ENCODE measurements at regions of chr6 and their contacts with region 1.

Region 1: DNA sequence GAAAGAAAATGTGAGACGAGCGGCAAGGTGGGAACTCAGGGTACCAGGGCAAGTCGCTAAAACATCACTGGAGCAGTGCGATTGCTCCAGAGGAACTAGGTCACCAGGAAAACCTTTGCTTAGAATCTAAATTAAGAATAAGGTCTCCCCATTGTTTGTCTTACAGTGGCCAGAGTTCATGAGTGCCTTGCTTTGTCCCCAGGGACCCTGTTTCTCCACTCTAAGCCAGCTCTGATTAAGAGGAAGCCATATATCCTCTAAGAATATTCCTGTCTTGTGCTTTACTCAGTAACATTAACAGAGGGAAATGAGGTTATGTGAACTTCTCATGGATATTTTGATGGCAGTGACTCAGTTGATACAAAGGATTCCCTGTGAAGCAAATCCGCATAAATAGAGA is 305.8 kb downstream of the CD83 start:
- DNase-seq: no peak
- H3K4me3 Mint-ChIP-seq: no peak overlapping the region
- H3K27ac Mint-ChIP-seq: peak overlapping the region; percentile 26
- H3K4me1 Mint-ChIP-seq: peaks cover 26% of the 10 kb centered on the region
- H3K27me3 Mint-ChIP-seq: no peaks in the 10 kb centered on the region

Region 2: DNA sequence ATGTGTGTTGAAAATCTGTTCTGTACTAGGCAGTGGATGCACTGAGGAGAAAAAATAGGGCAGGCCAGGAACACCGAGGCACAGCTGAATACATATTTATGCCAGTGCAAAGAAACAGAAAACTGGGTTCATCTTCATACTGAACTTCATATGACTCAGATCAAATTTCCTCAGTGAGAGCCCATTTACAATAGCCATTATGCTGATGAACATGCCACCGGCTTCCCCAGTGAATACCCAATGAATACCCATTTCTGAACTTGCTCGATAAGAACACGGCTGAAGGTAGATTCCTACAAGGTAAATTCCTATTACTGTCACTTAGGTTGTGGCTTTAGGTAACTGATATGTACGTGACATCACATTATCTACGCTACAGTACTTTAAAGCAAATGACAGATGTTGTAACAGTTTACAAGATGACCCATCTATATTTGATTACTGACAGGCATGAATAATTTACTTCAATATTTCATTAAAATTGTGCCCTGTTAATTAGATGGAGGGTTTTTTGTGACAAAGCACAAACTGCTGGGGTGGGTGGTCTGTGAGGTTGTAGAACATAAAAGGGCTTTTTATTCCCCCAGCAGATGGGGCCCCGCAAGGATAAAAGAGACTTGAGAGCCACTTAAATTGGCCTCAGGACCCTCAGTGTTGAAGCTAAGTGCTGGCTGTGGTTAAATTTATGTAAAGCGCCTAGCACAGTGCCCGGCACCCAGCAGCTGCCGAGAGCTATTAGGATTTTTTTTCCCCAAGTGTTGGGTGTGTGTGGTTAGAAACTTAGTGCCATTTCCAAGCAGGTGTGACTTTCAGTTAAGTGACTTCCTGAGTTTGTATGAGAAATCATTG is 41.3 kb before region 1 on chr6:
- intact Hi-C with region 1: loop called (anchors 2 kb)
- DNase-seq: peak; percentile 1
- H3K4me3 Mint-ChIP-seq: no peak overlapping the region
- H3K27ac Mint-ChIP-seq: no peak overlapping the region
- H3K4me1 Mint-ChIP-seq: peaks cover 39% of the 10 kb centered on the region
- H3K27me3 Mint-ChIP-seq: peaks cover 2% of the 10 kb centered on the region

Region 3: DNA sequence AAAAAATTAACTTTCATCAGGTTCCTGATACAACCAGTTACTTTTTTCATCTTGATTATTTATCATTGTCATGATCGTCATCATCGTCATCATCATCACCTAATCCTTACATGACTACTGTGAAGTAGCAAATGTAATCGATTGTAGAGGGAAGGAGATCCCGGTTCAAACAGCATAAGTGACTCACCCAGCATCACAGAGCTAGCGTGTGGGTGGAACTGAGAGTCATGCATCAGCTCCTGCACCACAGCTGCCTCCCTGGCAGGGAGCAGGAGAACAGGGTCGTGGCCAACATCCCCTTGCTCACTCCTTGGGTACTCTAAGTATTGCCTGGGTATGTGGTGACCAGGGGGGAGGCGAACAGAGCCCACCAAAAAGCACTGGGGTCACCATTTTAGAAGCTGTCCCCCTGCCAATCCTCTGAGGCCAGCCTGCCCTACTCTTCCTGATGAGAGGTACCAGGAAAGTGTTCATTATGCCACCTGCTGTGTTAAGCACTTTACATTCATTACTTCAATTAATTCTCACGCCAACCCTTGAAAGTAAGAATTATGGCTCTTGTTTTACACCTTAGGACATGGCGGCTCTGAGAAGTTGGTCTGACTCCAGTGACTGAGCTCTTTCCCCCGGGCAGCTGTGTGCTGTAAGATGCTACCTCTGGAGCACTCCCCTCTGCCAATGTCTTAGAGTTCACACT is 119.5 kb after region 1 on chr6:
- intact Hi-C with region 1: loop called (anchors 1 kb)
- DNase-seq: peak; percentile 10
- H3K4me3 Mint-ChIP-seq: no peak overlapping the region
- H3K27ac Mint-ChIP-seq: peak overlapping the region; percentile 64
- H3K4me1 Mint-ChIP-seq: peaks cover 26% of the 10 kb centered on the region
- H3K27me3 Mint-ChIP-seq: peaks cover 1% of the 10 kb centered on the region

Region 4: GRCh38 chr6:14665827-14666724 is 242.7 kb after region 1 on chr6:
- intact Hi-C with region 1: loop called (anchors 10 kb)
- DNase-seq: no peak
- H3K4me3 Mint-ChIP-seq: no peak overlapping the region
- H3K27ac Mint-ChIP-seq: no peak overlapping the region
- H3K4me1 Mint-ChIP-seq: peaks cover 28% of the 10 kb centered on the region
- H3K27me3 Mint-ChIP-seq: peaks cover 32% of the 10 kb centered on the region

Region 5: GRCh38 chr6:15023448-15023847 is 600.1 kb after region 1 on chr6:
- intact Hi-C with region 1: loop called (anchors 1 kb)
- DNase-seq: peak; percentile 48
- H3K4me3 Mint-ChIP-seq: peak overlapping the region; percentile 31
- H3K27ac Mint-ChIP-seq: peak overlapping the region; percentile 94
- H3K4me1 Mint-ChIP-seq: peaks cover 53% of the 10 kb centered on the region
- H3K27me3 Mint-ChIP-seq: no peaks in the 10 kb centered on the region